ENCODE measurements at regions of chr6 and their contacts with region 1.

Region 1: DNA sequence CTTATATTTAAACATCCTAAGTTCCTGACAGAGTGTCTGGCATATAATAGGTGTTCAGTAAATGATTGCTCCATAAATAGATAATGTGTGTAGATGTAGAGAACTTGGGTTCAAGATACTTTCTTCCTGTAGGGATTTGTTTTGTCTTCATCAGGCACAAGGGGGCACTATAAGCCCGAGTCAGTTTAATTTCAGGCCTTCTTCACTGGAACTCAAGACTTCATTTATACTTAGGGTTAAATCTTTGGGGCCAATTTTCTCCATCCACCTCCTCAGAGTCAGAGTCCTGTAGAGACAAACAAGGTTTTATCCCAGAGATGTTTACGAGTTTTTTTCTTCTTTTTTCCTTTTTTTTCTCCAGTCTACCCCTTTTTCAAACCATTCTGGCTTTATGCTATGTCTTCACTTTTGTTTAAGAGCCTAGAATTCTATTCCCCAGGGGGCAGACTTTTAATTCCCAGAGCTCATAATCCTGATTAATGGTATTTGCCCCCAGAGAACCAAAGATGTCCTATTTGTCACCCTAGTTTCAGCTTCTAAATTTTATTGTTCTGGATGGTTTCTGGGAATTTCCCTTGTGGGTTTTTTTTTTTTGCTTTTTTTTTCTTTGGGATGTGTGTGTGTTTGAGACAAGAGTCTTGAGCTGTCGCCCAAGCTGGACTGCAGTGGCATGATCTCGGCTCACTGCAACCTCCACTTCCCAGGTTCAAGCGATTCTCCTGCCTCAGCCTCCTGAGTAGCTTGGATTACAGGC is 88.4 kb downstream of the HFE start:
- DNase-seq: peak; percentile 77
- H3K4me3 Mint-ChIP-seq: no peak overlapping the region
- H3K27ac Mint-ChIP-seq: no peak overlapping the region
- H3K4me1 Mint-ChIP-seq: peaks cover 34% of the 10 kb centered on the region
- H3K27me3 Mint-ChIP-seq: no peaks in the 10 kb centered on the region

Region 2: DNA sequence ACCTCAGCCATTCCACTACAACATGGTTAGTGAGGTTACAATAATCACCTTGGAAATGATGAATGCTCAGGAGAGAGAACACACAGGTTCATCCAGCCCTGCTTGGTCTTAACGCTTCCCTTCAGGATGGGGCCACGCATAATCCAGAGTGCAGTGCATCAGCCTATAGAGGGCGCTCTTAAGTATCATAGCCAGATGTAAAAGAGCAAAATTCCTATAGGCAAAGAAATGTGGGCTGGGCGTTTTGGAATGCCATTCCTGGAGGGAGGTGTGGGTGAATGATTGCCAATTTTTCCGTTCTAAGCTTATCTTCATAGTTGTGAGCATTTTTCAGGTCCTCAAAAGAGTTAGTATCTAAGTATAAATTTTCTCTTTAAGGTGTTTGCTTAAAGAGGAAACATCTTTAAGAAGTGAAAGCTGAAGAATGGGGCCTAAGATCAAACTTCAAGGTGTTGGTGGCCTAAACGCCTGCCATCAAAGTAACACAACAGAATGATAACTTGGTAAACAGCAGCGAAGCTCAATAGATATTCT is 1241.7 kb before region 1 on chr6:
- CTCF ChIA-PET with region 1: no interaction called
- intact Hi-C with region 1: no loop called
- DNase-seq: peak; percentile 67
- H3K4me3 Mint-ChIP-seq: peak overlapping the region; percentile 96
- H3K27ac Mint-ChIP-seq: peak overlapping the region; percentile 96
- H3K4me1 Mint-ChIP-seq: peaks cover 73% of the 10 kb centered on the region
- H3K27me3 Mint-ChIP-seq: no peaks in the 10 kb centered on the region

Region 3: DNA sequence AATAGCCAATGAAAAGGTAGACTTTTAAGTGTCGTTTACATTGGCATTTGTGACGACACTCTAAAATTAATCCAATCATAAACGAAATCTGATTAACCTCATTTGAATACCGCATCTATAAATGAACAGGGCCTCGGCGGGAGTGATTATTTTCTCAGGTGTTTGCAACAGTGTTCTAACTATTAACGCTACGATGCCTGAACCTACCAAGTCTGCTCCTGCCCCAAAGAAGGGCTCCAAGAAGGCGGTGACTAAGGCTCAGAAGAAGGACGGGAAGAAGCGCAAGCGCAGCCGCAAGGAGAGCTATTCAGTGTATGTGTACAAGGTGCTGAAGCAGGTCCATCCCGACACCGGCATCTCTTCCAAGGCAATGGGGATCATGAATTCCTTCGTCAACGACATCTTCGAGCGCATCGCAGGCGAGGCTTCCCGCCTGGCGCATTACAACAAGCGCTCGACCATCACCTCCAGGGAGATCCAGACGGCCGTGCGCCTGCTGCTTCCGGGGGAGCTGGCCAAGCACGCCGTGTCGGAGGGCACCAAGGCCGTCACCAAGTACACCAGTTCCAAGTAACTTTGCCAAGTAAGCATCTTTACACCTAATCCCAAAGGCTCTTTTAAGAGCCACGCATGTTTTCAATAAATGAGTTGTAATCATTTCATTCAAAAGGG is 17.5 kb before region 1 on chr6:
- CTCF ChIA-PET with region 1: interaction called, 4 read pairs
- intact Hi-C with region 1: loop called (anchors 1 kb)
- DNase-seq: peak; percentile 92
- H3K4me3 Mint-ChIP-seq: peak overlapping the region; percentile 79
- H3K27ac Mint-ChIP-seq: peak overlapping the region; percentile 97
- H3K4me1 Mint-ChIP-seq: peaks cover 50% of the 10 kb centered on the region
- H3K27me3 Mint-ChIP-seq: peaks cover 13% of the 10 kb centered on the region

Region 4: DNA sequence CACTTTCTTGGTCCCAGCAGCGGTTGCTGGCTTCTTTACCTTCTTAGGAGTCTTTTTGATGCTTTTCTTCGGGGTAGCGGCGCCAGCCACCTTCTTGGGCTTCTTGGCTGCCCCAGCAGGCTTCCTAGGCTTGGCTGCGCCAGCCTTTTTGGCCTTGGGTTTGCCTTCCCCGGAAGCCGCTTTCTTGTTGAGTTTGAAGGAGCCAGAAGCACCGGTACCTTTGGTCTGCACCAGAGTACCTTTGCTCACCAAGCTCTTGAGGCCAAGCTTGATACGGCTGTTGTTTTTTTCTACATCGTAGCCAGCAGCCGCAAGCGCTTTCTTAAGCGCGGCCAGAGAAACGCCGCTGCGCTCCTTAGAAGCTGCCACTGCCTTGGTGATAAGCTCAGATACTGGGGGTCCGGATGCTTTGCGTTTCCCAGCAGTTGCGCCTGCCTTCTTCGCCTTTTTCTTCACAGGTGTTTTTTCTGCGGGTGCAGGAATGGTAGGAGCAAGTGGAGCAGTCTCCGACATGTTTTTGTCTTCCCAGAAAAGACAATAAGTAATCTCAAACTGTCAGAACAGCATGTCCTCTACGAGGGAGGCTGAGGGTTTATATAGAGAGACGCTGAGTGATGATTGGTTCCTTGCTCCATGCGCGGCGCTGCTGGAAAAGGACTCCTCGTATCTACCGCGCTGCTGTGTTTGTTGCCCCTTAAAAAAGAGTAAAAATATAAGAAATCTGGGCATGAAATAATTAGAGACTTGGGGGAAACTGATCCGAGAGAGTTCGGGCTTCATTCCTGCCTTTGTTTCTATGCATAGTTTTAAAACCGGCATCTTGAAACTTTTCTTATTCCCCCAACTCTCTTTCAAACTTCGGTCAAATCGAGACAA is 59.1 kb after region 1 on chr6:
- CTCF ChIA-PET with region 1: interaction called, 3 read pairs
- intact Hi-C with region 1: loop called (anchors 2 kb)
- DNase-seq: peak; percentile 90
- H3K4me3 Mint-ChIP-seq: peak overlapping the region; percentile 83
- H3K27ac Mint-ChIP-seq: peak overlapping the region; percentile 100
- H3K4me1 Mint-ChIP-seq: peaks cover 28% of the 10 kb centered on the region
- H3K27me3 Mint-ChIP-seq: peaks cover 3% of the 10 kb centered on the region

Region 5: GRCh38 chr6:26312501-26313390 is 137.1 kb after region 1 on chr6:
- CTCF ChIA-PET with region 1: no interaction called
- intact Hi-C with region 1: loop called (anchors 2 kb)
- DNase-seq: peak; percentile 95
- H3K4me3 Mint-ChIP-seq: peak overlapping the region; percentile 81
- H3K27ac Mint-ChIP-seq: peak overlapping the region; percentile 83
- H3K4me1 Mint-ChIP-seq: peaks cover 28% of the 10 kb centered on the region
- H3K27me3 Mint-ChIP-seq: no peaks in the 10 kb centered on the region

Region 6: GRCh38 chr6:26537846-26538571 is 362.4 kb after region 1 on chr6 and contains the start of gene HMGN4:
- CTCF ChIA-PET with region 1: no interaction called
- intact Hi-C with region 1: loop called (anchors 1 kb)
- DNase-seq: peak; percentile 82
- H3K4me3 Mint-ChIP-seq: peak within 1 kb of the TSS; percentile 87
- H3K27ac Mint-ChIP-seq: peak within 1 kb of the TSS; percentile 98
- H3K4me1 Mint-ChIP-seq: peaks cover 56% of the 10 kb centered on the region
- H3K27me3 Mint-ChIP-seq: no peaks in the 10 kb centered on the region
- total RNA-seq, gene HMGN4: 70.4 to 73.2 TPM

Region 7: DNA sequence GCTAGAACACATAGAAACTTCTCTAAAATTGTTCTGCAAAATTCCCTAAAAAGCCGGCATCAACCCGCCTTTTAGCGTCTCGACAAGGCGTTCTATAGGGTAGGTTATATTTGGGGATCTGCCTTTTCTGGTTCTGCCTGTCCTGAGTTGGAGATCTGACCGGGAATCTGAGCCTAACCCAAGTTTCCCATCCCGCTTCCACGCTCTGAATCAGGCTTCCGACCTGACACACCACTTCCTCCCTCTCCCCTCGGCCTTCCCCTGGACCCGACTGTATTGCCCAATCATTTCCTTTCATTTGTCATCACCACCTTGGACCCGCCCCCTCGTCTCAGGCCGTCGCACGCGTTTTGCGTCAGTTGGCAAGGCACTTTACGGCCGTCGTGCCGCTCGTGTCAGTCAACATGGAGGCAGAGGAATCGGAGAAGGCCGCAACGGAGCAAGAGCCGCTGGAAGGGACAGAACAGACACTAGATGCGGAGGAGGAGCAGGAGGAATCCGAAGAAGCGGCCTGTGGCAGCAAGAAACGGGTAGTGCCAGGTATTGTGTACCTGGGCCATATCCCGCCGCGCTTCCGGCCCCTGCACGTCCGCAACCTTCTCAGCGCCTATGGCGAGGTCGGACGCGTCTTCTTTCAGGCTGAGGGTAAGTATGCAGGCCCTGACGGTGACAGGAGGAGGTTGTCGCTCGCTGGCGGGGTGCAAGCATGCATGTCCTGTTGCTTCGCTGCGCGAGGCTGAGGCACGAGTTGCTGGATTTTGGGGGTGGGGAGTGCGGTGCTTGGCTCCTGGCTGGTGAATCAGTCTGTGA is 421.2 kb after region 1 on chr6 and contains the start of gene ABT1:
- CTCF ChIA-PET with region 1: no interaction called
- intact Hi-C with region 1: loop called (anchors 1 kb)
- DNase-seq: peak; percentile 99
- H3K4me3 Mint-ChIP-seq: no peak within 1 kb of the TSS
- H3K27ac Mint-ChIP-seq: no peak within 1 kb of the TSS
- H3K4me1 Mint-ChIP-seq: peaks cover 53% of the 10 kb centered on the region
- H3K27me3 Mint-ChIP-seq: peaks cover 24% of the 10 kb centered on the region
- total RNA-seq, gene ABT1: 17.3 to 18.4 TPM